B cell (primary cell): ENCODE measurements at regions of chr9 and their contacts with region 1.

Region 1: GRCh38 chr9:37329576-37329975 is 92.9 kb upstream of the GRHPR start:
- DNase-seq: peak; percentile 75
- ATAC-seq: peak; percentile 40
- H3K4me3 ChIP-seq: no peak overlapping the region
- H3K4me3 Mint-ChIP-seq: peak overlapping the region; percentile 44
- H3K27ac ChIP-seq: peak overlapping the region in 1 of 2 donors; percentile 4
- H3K27ac Mint-ChIP-seq: peak overlapping the region; percentile 90
- H3K4me1 ChIP-seq: peaks cover 25 to 84% of the 10 kb centered on the region in 2 donors
- H3K4me1 Mint-ChIP-seq: peaks cover 58% of the 10 kb centered on the region
- H3K27me3 ChIP-seq: no peaks in the 10 kb centered on the region
- H3K27me3 Mint-ChIP-seq: no peaks in the 10 kb centered on the region
- CTCF ChIP-seq: peak; percentile 82

Region 2: DNA sequence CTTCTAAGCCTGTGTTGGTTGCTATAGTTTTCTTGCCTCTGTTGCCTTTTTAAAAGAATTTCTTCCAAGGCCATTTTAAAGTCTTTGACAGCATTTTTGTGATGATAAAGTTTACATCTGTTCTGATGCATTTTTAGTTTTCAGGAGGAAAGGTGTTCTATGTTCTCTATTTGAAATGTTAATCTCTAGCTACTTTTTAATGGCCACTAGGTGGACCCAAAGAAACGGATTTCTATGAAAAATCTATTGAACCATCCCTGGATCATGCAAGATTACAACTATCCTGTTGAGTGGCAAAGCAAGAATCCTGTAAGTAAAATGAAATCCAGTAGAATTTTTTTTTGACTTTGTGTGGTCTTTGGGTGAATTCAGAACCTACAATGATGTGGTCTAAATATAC is 696.7 kb before region 1 on chr9:
- CTCF ChIA-PET with region 1: interaction called, 3 read pairs
- POLR2A ChIA-PET with region 1: no interaction called
- intact Hi-C with region 1: loop called (anchors 10 kb)
- DNase-seq: peak; percentile 45
- ATAC-seq: no peak
- H3K4me3 ChIP-seq: no peak overlapping the region
- H3K4me3 Mint-ChIP-seq: no peak overlapping the region
- H3K27ac ChIP-seq: no peak overlapping the region
- H3K27ac Mint-ChIP-seq: no peak overlapping the region
- H3K4me1 ChIP-seq: no peaks in the 10 kb centered on the region
- H3K4me1 Mint-ChIP-seq: no peaks in the 10 kb centered on the region
- H3K27me3 ChIP-seq: no peaks in the 10 kb centered on the region
- H3K27me3 Mint-ChIP-seq: no peaks in the 10 kb centered on the region
- CTCF ChIP-seq: peak; percentile 75

Region 3: GRCh38 chr9:37079370-37080164 is 250.0 kb before region 1 on chr9:
- CTCF ChIA-PET with region 1: no interaction called
- POLR2A ChIA-PET with region 1: no interaction called
- intact Hi-C with region 1: loop called (anchors 2 kb)
- DNase-seq: peak; percentile 96
- ATAC-seq: peak; percentile 95
- H3K4me3 ChIP-seq: peak overlapping the region; percentile 84 to 99 (median 95)
- H3K4me3 Mint-ChIP-seq: peak overlapping the region; percentile 99
- H3K27ac ChIP-seq: peak overlapping the region; percentile 91 to 97
- H3K27ac Mint-ChIP-seq: peak overlapping the region; percentile 98
- H3K4me1 ChIP-seq: peaks cover 54 to 55% of the 10 kb centered on the region in 2 donors
- H3K4me1 Mint-ChIP-seq: peaks cover 74% of the 10 kb centered on the region
- H3K27me3 ChIP-seq: no peaks in the 10 kb centered on the region
- H3K27me3 Mint-ChIP-seq: no peaks in the 10 kb centered on the region
- CTCF ChIP-seq: no peak

Region 4: GRCh38 chr9:37187713-37188439 is 141.7 kb before region 1 on chr9:
- CTCF ChIA-PET with region 1: interaction called, 10 read pairs
- POLR2A ChIA-PET with region 1: no interaction called
- intact Hi-C with region 1: no loop called
- DNase-seq: no peak
- ATAC-seq: peak; percentile 78
- H3K4me3 ChIP-seq: peak overlapping the region; percentile 29 to 56 (median 41)
- H3K4me3 Mint-ChIP-seq: peak overlapping the region; percentile 82
- H3K27ac ChIP-seq: peak overlapping the region; percentile 89 to 92
- H3K27ac Mint-ChIP-seq: peak overlapping the region; percentile 70
- H3K4me1 ChIP-seq: peaks cover 46 to 76% of the 10 kb centered on the region in 2 donors
- H3K4me1 Mint-ChIP-seq: peaks cover 75% of the 10 kb centered on the region
- H3K27me3 ChIP-seq: no peaks in the 10 kb centered on the region
- H3K27me3 Mint-ChIP-seq: no peaks in the 10 kb centered on the region
- CTCF ChIP-seq: no peak

Region 5: DNA sequence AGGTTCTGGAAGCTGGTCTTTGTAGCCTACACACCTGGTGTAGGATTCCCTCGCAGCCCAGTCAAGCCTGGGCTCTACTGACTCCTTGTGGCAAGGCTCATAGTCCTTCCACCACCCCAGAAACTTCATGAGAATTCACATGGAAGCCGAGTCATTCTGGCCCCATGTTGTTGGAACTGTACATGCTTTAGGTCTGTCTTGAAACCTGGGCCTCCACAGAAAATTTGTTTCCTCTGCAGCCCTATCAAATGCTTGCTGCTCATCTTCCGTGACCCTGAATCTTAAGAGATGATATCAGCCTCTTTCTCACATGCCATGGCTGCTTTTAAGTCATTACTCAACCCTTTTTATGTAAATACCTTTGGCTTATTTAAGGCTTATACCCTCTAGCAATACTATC is 20.4 kb before region 1 on chr9:
- CTCF ChIA-PET with region 1: interaction called, 13 read pairs
- POLR2A ChIA-PET with region 1: interaction called, 14 read pairs
- intact Hi-C with region 1: loop called (anchors 1 kb)
- DNase-seq: peak; percentile 77
- ATAC-seq: peak; percentile 82
- H3K4me3 ChIP-seq: no peak overlapping the region
- H3K4me3 Mint-ChIP-seq: peak overlapping the region; percentile 16
- H3K27ac ChIP-seq: peak overlapping the region; percentile 5 to 64
- H3K27ac Mint-ChIP-seq: peak overlapping the region; percentile 84
- H3K4me1 ChIP-seq: peaks cover 27 to 42% of the 10 kb centered on the region in 2 donors
- H3K4me1 Mint-ChIP-seq: peaks cover 35% of the 10 kb centered on the region
- H3K27me3 ChIP-seq: no peaks in the 10 kb centered on the region
- H3K27me3 Mint-ChIP-seq: no peaks in the 10 kb centered on the region
- CTCF ChIP-seq: peak; percentile 76

Region 6: GRCh38 chr9:37371565-37372464 is 42.2 kb after region 1 on chr9:
- CTCF ChIA-PET with region 1: interaction called, 10 read pairs
- POLR2A ChIA-PET with region 1: interaction called, 4 read pairs
- intact Hi-C with region 1: no loop called
- DNase-seq: peak; percentile 74
- ATAC-seq: peak; percentile 4
- H3K4me3 ChIP-seq: peak overlapping the region in 2 of 5 experiments; percentile 25 to 38
- H3K4me3 Mint-ChIP-seq: peak overlapping the region; percentile 70
- H3K27ac ChIP-seq: peak overlapping the region; percentile 78 to 94
- H3K27ac Mint-ChIP-seq: peak overlapping the region; percentile 88
- H3K4me1 ChIP-seq: peaks cover 95 to 100% of the 10 kb centered on the region in 2 donors
- H3K4me1 Mint-ChIP-seq: peaks cover 88% of the 10 kb centered on the region
- H3K27me3 ChIP-seq: no peaks in the 10 kb centered on the region
- H3K27me3 Mint-ChIP-seq: no peaks in the 10 kb centered on the region
- CTCF ChIP-seq: no peak

Region 7: DNA sequence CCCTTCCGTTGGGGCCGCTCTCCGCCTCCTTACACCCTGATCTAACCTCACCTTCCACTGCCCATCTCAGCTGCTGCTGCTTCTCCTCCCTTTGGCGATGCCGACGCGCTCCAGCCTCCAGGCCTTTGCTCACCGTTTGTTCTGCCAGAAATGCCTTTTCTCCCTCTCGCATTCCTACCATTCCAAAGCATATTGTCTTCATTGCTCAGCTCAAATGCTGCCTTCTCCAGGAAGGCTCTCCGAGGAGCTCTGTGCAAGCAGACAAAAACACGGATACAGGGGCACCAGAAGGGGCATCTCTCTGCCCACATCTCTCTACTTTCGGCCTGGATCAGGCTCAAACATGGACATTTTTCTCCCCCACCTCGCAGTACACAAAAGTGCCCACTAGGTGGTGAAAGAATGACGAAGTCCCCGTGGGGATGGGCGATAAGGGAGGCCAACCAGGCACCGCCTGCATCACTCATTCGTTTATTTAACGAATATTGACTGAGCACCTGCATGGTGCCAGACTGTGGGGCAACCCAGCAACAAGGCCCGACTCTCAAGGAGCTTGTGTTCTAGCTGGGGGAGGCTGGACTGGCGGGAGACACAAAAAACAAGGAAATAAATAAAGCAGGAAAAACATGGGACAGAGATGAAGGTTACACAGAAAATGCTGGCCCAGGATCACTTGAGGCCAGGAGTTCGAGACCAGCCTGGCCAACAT is 85.6 kb after region 1 on chr9:
- CTCF ChIA-PET with region 1: interaction called, 79 read pairs
- POLR2A ChIA-PET with region 1: interaction called, 5 read pairs
- intact Hi-C with region 1: no loop called
- DNase-seq: peak; percentile 86
- ATAC-seq: peak; percentile 84
- H3K4me3 ChIP-seq: no peak overlapping the region
- H3K4me3 Mint-ChIP-seq: peak overlapping the region; percentile 67
- H3K27ac ChIP-seq: no peak overlapping the region
- H3K27ac Mint-ChIP-seq: peak overlapping the region; percentile 79
- H3K4me1 ChIP-seq: peaks cover 32 to 45% of the 10 kb centered on the region in 2 donors
- H3K4me1 Mint-ChIP-seq: peaks cover 42% of the 10 kb centered on the region
- H3K27me3 ChIP-seq: no peaks in the 10 kb centered on the region
- H3K27me3 Mint-ChIP-seq: no peaks in the 10 kb centered on the region
- CTCF ChIP-seq: peak; percentile 83

Region 8: GRCh38 chr9:37540634-37541033 is 211.1 kb after region 1 on chr9:
- CTCF ChIA-PET with region 1: no interaction called
- POLR2A ChIA-PET with region 1: no interaction called
- intact Hi-C with region 1: no loop called
- DNase-seq: no peak
- ATAC-seq: no peak
- H3K4me3 ChIP-seq: no peak overlapping the region
- H3K4me3 Mint-ChIP-seq: no peak overlapping the region
- H3K27ac ChIP-seq: no peak overlapping the region
- H3K27ac Mint-ChIP-seq: no peak overlapping the region
- H3K4me1 ChIP-seq: peaks cover 0 to 8% of the 10 kb centered on the region in 2 donors
- H3K4me1 Mint-ChIP-seq: peaks cover 24% of the 10 kb centered on the region
- H3K27me3 ChIP-seq: no peaks in the 10 kb centered on the region
- H3K27me3 Mint-ChIP-seq: no peaks in the 10 kb centered on the region
- CTCF ChIP-seq: no peak